Mucosa of descending colon (tissue), 3 donors: ENCODE measurements at regions of chr19 and their contacts with region 1.

Region 1: GRCh38 chr19:3618144-3618810 is 8.3 kb downstream of the CACTIN start:
- DNase-seq: peak; percentile 70 to 80 (median 72)
- ATAC-seq: peak; percentile 83
- H3K4me3 ChIP-seq: no peak overlapping the region
- H3K4me1 ChIP-seq: no peaks in the 10 kb centered on the region
- CTCF ChIP-seq: peak; percentile 86

Region 2: DNA sequence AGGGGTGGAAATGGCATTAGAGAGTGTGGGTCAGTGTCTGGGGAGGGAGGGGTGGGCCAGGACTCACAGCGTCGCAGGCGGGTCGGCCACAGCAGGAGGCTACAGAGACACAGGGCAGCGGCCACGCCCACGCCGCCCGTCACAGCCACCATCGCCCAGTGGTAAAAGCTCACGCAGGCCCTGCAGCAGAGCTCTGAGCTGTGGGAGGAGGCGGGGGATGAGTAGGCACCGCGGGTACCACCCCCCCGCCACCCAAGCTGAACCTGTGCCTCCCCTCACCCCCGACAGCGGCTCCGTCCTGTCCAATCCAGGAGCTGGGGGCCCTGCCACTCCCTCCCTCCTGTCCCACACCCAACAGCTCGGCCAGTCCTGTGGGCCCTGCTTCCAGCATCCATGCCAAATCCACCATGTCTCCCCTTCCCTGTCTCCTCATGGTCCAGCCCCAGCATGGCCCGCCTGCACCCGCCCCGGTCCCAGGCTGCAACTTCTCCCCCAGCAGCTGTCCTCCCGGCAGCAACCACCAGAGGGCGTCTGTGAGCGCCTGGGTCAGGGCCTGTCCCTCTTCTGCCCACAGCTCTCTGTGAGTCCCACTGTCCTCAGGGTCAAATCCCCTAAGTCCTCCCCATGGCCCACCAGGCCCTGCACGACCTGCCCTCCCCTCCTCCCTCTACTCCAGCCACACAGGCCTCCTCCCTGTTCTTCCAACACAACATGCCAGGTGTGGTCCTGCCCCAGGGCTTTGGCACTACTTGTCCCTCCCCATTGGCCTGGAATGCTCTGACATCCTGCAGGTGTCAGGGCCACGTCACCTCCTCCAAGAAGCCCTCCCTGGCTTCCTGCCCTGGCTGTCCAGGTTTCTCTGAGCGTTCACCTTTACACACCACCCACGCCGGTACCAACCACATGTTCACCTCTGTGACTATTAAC is 73.3 kb before region 1 on chr19:
- intact Hi-C with region 1: loop called in 1 of 2 experiments (anchors 10 kb)
- DNase-seq: peak; percentile 75 to 91 (median 84)
- ATAC-seq: peak; percentile 88
- H3K4me3 ChIP-seq: no peak overlapping the region
- H3K4me1 ChIP-seq: no peaks in the 10 kb centered on the region
- CTCF ChIP-seq: peak; percentile 94

Region 3: GRCh38 chr19:3655402-3656072 is 37.3 kb after region 1 on chr19:
- intact Hi-C with region 1: no loop called
- DNase-seq: no peak
- ATAC-seq: peak; percentile 59
- H3K4me3 ChIP-seq: no peak overlapping the region
- H3K4me1 ChIP-seq: no peaks in the 10 kb centered on the region
- CTCF ChIP-seq: no peak

Region 4: GRCh38 chr19:3710265-3710812 is 92.1 kb after region 1 on chr19:
- intact Hi-C with region 1: no loop called
- DNase-seq: peak; percentile 96 to 99 (median 97)
- ATAC-seq: peak; percentile 85
- H3K4me3 ChIP-seq: no peak overlapping the region
- H3K4me1 ChIP-seq: peaks cover 26% of the 10 kb centered on the region
- CTCF ChIP-seq: no peak